ENCODE measurements at regions of chr3 and their contacts with region 1.

Region 1: DNA sequence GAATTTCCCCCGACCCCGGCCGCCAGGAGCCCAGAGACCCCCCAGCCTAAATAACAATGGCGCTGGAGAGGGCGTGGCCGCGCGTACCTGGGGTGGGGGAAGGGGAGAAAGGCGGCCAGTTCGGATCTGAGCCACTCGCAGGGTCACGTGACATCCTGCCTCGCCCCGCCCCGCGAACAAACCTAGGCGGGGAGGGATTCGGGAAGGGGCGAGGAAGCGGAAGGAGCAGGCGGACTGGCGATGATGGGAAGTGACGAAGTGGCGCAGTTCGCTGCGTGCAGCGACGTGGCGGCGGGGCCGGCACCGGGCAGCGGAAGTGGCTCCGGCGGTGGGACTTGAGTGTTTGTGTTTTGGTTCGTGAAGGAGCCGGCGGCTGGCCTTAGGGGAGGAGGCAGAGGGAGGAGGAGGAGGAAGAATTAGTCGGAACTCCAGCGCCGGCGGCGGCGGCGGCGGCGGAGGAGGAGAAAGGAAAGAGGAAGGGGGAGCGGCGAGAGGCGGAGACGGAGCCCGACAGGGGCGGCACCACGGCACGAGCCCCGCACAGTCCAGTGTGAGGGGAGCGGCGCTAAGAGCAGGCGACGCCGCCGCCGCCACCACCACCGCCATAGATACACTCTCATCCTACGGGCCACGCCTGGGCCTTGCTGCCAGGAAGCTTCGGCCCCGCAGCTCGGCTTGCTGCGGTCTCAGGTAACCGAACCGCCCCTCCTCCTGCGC is at the start of gene RAB5A:
- H3K4me3 Mint-ChIP-seq: peak within 1 kb of the TSS; percentile 93
- H3K27ac Mint-ChIP-seq: peak within 1 kb of the TSS; percentile 98
- H3K4me1 Mint-ChIP-seq: peaks cover 27% of the 10 kb centered on the region
- H3K27me3 Mint-ChIP-seq: no peaks in the 10 kb centered on the region

Region 2: DNA sequence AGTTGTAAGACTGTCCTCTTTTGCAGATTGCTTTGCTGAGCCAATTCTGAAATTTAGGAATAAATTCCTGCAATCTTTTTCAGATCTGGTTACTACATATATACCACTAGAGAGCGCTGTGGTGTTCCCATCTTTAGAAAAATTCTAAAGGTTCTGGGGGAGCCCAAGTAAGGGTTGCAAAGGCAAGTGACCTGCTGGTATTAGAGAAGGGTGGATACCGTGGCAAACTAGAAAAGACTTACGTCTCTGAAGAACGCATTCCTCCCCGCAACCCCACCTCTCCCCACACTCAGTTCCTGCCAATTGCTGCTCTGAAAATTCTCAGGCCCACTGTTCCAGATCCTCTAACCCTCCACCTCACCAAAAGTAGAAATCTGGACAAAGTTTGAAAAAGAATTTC is 61.5 kb before region 1 on chr3:
- intact Hi-C with region 1: loop called (anchors 5 kb)
- H3K4me3 Mint-ChIP-seq: no peak overlapping the region
- H3K27ac Mint-ChIP-seq: no peak overlapping the region
- H3K4me1 Mint-ChIP-seq: no peaks in the 10 kb centered on the region
- H3K27me3 Mint-ChIP-seq: no peaks in the 10 kb centered on the region

Region 3: GRCh38 chr3:19901337-19901736 is 45.7 kb before region 1 on chr3:
- intact Hi-C with region 1: loop called (anchors 2 kb)
- H3K4me3 Mint-ChIP-seq: no peak overlapping the region
- H3K27ac Mint-ChIP-seq: no peak overlapping the region
- H3K4me1 Mint-ChIP-seq: peaks cover 10% of the 10 kb centered on the region
- H3K27me3 Mint-ChIP-seq: no peaks in the 10 kb centered on the region

Region 4: GRCh38 chr3:19931180-19931692 is 15.8 kb before region 1 on chr3:
- intact Hi-C with region 1: loop called (anchors 1 kb)
- H3K4me3 Mint-ChIP-seq: peak overlapping the region; percentile 71
- H3K27ac Mint-ChIP-seq: peak overlapping the region; percentile 97
- H3K4me1 Mint-ChIP-seq: peaks cover 57% of the 10 kb centered on the region
- H3K27me3 Mint-ChIP-seq: peaks cover 10% of the 10 kb centered on the region

Region 5: GRCh38 chr3:20039766-20040475 is 92.9 kb after region 1 on chr3 and contains the start of gene KAT2B:
- intact Hi-C with region 1: loop called (anchors 1 kb)
- H3K4me3 Mint-ChIP-seq: peak within 1 kb of the TSS; percentile 88
- H3K27ac Mint-ChIP-seq: peak within 1 kb of the TSS; percentile 93
- H3K4me1 Mint-ChIP-seq: peaks cover 35% of the 10 kb centered on the region
- H3K27me3 Mint-ChIP-seq: no peaks in the 10 kb centered on the region

Region 6: DNA sequence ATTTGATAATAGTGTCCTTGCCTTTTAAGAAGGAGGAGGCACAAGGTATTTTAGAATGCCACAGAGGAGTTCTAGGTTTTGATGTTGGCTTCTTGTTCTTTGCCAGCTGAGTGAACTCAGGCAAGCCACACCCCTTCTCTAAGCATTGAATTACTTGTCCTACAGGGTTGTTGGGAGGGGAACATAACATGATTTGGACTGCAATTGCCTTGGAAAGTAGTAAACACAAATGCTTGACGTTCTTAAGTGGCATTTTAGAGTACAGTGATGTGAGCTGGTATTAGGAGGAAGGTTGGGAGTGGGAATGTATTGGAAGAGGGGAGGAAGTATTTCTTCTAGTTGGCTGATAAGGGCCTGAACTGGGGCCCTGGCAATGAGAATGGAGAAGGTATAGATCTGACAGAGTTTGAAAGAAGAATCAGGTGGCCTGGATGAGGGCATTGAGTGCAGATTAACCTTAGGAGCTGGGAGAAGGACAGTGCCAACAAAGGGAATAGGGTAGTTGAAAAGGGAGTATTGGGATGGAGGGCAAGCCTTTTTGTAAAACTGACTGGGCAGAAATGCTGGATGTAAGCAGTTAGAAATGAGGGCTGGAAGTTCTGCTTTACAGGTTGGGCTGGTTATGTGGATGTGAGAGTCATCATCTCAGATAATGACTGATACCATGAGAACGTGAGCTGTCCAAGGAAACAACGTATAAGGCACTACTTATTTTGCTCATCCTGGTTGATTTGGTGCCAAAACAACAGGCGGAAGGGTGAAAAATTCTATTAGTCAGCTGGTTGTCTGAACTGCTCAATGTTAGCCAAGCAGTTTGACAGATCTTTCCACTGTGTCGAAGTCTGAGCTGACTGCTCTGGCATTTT is 110.0 kb after region 1 on chr3:
- intact Hi-C with region 1: loop called (anchors 5 kb)
- H3K4me3 Mint-ChIP-seq: no peak overlapping the region
- H3K27ac Mint-ChIP-seq: no peak overlapping the region
- H3K4me1 Mint-ChIP-seq: peaks cover 30% of the 10 kb centered on the region
- H3K27me3 Mint-ChIP-seq: no peaks in the 10 kb centered on the region

Region 7: DNA sequence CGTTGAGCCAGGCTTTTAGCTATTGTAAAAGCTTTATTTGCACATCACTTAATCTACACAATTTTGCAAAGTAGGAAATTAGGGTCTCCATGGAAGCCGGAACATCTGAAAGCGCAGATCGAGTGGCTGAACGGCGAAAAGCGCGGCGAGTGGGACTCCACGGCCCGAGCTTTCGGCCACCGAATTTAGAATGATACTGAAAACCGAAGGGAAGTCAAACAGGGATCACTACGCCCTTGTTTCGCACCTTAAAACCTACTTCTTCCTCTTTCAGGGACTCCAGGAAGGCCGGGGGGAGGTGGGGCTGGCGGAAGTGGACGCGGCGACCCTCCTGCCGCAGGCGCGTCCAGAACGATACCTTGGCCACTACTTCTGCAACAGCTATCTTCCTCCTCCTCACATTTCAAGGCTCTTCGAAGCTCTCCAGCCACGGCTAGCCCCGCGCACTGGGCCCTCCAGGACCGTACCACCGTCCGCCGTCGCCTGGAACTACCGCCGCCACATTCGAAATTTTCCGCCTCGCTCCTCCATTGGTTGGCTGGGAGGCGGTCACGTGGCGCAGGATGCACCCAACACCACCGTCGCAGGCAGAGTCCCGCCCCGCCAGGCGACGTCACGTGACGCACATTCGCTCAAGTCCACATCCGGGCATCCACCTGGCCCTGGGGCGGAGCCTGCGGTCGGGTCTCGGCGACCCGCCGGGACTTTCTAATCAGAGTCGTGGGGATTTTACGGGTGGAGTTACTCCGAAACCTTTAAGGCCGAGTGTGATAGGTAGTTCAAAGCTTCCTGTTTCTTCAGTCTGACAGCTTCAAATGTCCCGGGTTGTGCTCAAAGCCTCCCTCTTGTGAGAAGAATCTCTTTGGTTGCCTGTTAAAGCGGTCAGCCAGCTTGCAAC is 239.0 kb after region 1 on chr3 and contains the start of gene SGO1:
- intact Hi-C with region 1: loop called (anchors 5 kb)
- H3K4me3 Mint-ChIP-seq: no peak within 1 kb of the TSS
- H3K27ac Mint-ChIP-seq: no peak within 1 kb of the TSS
- H3K4me1 Mint-ChIP-seq: no peaks in the 10 kb centered on the region
- H3K27me3 Mint-ChIP-seq: no peaks in the 10 kb centered on the region

Region 8: DNA sequence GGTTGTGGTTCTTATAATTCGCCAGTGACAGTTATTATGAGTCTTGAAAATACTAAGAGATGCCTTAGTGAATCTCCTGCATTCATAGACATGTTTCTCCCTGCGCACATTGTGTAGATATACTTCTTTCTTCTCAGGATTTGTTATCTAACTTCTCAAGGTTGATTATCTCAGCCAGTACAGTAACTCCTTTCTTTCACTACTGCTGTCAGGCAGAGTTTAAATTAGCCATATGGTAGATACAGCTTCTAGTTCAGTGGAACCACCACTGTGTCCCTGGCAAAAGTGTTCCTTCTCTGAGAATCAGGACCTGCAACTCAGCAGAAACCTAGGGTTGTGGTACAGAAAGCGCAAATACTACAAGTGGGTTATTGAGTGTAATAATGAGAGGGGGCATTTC is 414.0 kb after region 1 on chr3:
- intact Hi-C with region 1: no loop called
- H3K4me3 Mint-ChIP-seq: no peak overlapping the region
- H3K27ac Mint-ChIP-seq: no peak overlapping the region
- H3K4me1 Mint-ChIP-seq: no peaks in the 10 kb centered on the region
- H3K27me3 Mint-ChIP-seq: no peaks in the 10 kb centered on the region